ENCODE measurements at regions of chr17 and their contacts with region 1.

Region 1: GRCh38 chr17:76053246-76054116 is 18.8 kb downstream of the SRP68 start:
- DNase-seq: peak; percentile 56 to 79
- H3K4me3 ChIP-seq: peak overlapping the region; percentile 22; the same call in 1 of the 2 replicates
- H3K27ac ChIP-seq: peak overlapping the region; percentile 94
- H3K4me1 ChIP-seq: peaks cover 60% of the 10 kb centered on the region
- H3K27me3 ChIP-seq: no peaks in the 10 kb centered on the region
- CTCF ChIP-seq: no peak

Region 2: DNA sequence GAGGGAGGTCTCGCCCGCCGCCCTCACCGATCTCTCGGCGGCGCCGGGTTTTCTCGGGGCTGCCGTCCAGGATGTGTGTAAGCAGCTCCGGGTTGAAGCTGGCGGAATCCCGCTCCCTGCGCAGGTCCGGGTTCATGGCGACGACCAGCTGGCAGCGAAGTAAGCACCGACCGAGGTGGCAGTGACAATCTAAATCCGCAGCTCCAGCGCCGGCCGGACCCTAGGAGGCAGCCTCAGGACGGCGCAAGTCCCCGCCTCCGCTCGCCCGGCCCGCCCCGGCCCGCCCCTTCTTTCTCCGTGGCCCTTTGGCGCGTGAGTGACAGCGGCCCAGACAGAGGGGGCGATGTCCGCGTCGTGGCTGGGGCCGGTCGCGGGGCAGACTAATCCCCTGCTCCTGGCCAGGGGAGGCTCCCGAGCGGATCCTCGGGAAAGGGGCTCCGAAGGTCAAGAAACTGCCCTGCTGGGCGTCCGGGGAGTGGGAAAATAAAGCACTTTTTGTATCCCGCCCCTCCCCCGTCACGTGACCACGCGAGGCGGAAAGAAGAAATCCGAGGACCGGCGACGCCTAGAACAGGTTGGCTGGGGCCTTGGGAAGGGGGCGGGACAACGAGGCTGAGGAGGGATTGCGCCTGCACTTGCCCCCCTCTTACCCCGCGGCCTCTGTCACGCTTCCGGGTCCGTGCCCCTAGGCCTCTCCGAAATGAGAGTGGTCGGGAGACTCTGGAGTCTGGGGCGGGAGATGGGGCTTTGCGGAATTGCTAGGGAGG is 74.4 kb before region 1 on chr17 and contains the starts of genes ACOX1 and TEN1:
- CTCF ChIA-PET with region 1: no interaction called
- POLR2A ChIA-PET with region 1: no interaction called
- intact Hi-C with region 1: loop called (anchors 1 kb)
- DNase-seq: peak; percentile 91 to 96
- H3K4me3 ChIP-seq: peak within 1 kb of the TSS; percentile 82
- H3K27ac ChIP-seq: peak within 1 kb of the TSS; percentile 87
- H3K4me1 ChIP-seq: peaks cover 63% of the 10 kb centered on the region
- H3K27me3 ChIP-seq: no peaks in the 10 kb centered on the region
- CTCF ChIP-seq: peak; percentile 21; the same call in 1 of the 2 replicates
- total RNA-seq, gene ACOX1: 35.5 and 37.1 TPM in 2 replicates
- total RNA-seq, gene TEN1: 19.6 and 22.7 TPM in 2 replicates

Region 3: GRCh38 chr17:76014184-76014924 is 39.1 kb before region 1 on chr17:
- CTCF ChIA-PET with region 1: interaction called, 16 read pairs
- POLR2A ChIA-PET with region 1: no interaction called
- intact Hi-C with region 1: loop called (anchors 1 kb)
- DNase-seq: peak in 1 of 2 experiments; percentile 69
- H3K4me3 ChIP-seq: no peak overlapping the region
- H3K27ac ChIP-seq: no peak overlapping the region
- H3K4me1 ChIP-seq: no peaks in the 10 kb centered on the region
- H3K27me3 ChIP-seq: no peaks in the 10 kb centered on the region
- CTCF ChIP-seq: peak; percentile 94

Region 4: GRCh38 chr17:76027159-76027839 is 26.2 kb before region 1 on chr17 and contains the start of gene EVPL:
- CTCF ChIA-PET with region 1: interaction called, 3 read pairs
- POLR2A ChIA-PET with region 1: interaction called, 4 read pairs
- intact Hi-C with region 1: loop called (anchors 1 kb)
- DNase-seq: peak; percentile 91 to 98
- H3K4me3 ChIP-seq: peak within 1 kb of the TSS; percentile 71
- H3K27ac ChIP-seq: peak within 1 kb of the TSS; percentile 47; the same call in 1 of the 2 replicates
- H3K4me1 ChIP-seq: peaks cover 25% of the 10 kb centered on the region
- H3K27me3 ChIP-seq: no peaks in the 10 kb centered on the region
- CTCF ChIP-seq: no peak
- total RNA-seq, gene EVPL: 60.8 and 77.8 TPM in 2 replicates

Region 5: DNA sequence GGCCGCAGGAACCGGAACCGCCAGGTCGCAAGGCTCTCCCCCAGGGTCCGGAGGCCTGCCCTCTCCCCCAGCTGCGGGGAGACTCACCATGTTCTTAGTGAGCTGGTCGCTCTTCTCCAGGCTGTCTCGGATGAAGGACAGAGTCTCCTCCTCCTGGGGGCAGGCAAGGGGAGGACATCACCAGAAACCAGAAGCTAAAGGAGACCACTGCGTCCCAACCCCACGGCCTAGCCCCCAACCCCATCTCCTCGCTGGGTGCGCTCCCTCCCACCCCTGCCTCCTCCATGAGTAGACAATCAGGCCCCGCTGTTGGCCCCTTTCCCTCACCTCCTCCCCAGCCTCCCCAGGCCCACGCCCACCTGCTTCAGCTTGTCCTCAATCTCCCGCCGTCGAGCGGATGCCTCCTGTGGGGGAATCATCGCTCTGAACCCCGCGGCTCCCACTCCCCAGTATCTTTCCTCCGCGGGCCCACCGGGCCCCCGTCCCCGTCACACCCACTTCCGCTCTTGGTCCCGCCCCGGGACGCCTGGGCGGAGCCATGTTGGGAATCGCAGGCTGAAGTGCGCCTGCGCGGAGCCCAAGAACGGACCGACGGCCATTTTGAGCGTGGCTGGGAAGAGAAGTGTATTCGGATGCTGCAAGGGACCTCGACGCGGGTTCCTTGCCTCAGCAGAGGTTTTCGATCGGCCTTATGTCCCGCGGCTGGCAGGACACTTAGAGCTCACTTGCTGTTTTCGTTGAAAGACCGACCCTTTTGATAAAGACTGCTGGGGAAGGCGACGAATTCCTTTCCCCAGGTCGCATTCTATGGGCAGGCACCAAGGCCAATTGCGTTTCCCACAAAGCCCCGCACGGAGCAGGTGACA is 50.0 kb after region 1 on chr17 and contains the start of gene EXOC7:
- CTCF ChIA-PET with region 1: interaction called, 12 read pairs
- POLR2A ChIA-PET with region 1: interaction called, 5 read pairs
- intact Hi-C with region 1: no loop called
- DNase-seq: peak; percentile 69 to 92
- H3K4me3 ChIP-seq: peak within 1 kb of the TSS; percentile 86
- H3K27ac ChIP-seq: peak within 1 kb of the TSS; percentile 73
- H3K4me1 ChIP-seq: peaks cover 7% of the 10 kb centered on the region
- H3K27me3 ChIP-seq: no peaks in the 10 kb centered on the region
- CTCF ChIP-seq: no peak; the same call in 1 of the 2 replicates
- total RNA-seq, gene EXOC7: 118 and 131 TPM in 2 replicates

Region 6: DNA sequence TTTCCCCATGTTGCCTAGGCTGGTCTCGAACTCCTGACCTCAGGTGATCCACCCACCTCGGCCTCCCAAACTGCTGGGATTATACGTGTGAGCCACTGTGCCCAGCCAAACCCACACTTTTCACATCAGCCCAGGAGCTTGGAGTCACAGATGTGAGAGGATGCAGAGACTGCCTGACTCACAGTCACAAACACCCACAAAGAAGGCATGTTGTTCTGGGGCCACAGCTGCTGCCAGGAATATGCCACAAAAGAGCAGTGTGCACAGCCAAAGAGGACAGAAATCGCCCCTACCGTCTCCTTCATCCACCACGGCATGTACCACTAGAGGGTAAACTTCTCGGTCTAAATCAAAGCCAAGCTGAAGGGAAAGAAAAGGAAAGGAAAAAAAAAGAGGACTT is 112.7 kb after region 1 on chr17:
- CTCF ChIA-PET with region 1: no interaction called
- POLR2A ChIA-PET with region 1: no interaction called
- intact Hi-C with region 1: no loop called
- DNase-seq: no peak
- H3K4me3 ChIP-seq: no peak overlapping the region
- H3K27ac ChIP-seq: no peak overlapping the region
- H3K4me1 ChIP-seq: no peaks in the 10 kb centered on the region
- H3K27me3 ChIP-seq: no peaks in the 10 kb centered on the region
- CTCF ChIP-seq: no peak

Region 7: DNA sequence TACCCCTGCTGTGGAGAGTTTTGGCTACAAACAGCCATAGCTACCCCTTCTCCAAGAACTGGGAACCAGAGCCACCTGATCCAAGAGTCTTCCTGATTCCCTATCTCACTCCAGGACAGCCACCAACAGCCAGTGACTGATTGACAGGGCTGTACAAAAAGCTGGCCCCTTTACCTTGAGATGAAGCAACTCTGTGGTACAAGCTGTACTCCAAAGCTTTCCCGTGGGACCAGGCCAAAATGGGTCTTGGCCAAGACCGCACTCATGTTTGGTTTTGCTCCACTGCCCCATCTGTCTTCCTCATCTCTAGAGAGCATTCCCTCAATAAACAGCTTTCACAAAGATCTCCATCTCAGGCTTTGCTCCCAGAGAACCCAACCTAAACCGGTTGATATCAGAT is 143.2 kb after region 1 on chr17:
- CTCF ChIA-PET with region 1: no interaction called
- POLR2A ChIA-PET with region 1: no interaction called
- intact Hi-C with region 1: no loop called
- DNase-seq: no peak
- H3K4me3 ChIP-seq: no peak overlapping the region
- H3K27ac ChIP-seq: no peak overlapping the region
- H3K4me1 ChIP-seq: no peaks in the 10 kb centered on the region
- H3K27me3 ChIP-seq: no peaks in the 10 kb centered on the region
- CTCF ChIP-seq: no peak

Region 8: DNA sequence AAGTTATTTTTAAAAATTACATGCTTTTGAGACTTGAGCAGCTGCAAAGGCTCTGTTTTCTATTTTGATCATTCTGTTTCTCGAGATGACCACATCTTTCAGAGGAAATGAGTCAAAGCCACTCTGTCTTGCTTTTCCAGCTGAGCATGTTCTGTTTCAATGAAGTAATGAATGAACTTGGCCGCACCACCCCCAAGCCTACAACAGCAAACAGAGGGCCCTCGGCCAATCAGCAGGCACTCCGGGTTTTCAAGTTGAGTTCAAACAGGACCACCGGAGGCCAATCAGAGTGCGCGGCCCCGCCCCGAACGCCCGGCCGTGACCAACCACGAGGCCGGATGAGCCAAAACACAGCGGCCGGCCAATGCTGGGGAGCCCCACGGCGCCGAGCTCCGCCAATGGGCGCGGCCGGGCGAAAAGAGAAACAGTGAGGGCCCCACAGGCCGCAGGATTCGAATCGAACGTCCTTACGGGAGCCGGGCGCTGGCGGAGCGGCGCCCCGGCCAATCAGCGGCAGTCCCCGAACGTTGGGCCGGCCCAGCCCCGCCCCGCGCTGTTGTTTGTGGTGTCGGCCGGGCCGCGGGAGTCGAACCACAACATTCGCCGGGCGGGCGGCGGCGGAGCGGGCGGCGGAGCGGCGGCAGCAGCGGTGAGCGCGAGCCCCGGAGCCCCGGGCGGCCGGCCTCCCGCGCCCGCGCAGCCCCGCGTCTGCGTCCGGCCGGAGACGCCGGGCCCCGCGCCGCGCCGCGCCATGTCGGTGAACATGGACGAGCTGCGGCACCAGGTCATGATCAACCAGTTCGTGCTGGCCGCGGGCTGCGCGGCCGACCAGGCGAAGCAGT is 211.5 kb after region 1 on chr17 and contains the start of gene UBALD2:
- CTCF ChIA-PET with region 1: no interaction called
- POLR2A ChIA-PET with region 1: no interaction called
- intact Hi-C with region 1: loop called (anchors 1 kb)
- DNase-seq: peak; percentile 97 to 99
- H3K4me3 ChIP-seq: peak within 1 kb of the TSS; percentile 77
- H3K27ac ChIP-seq: peak within 1 kb of the TSS; percentile 88
- H3K4me1 ChIP-seq: peaks cover 63% of the 10 kb centered on the region
- H3K27me3 ChIP-seq: no peaks in the 10 kb centered on the region
- CTCF ChIP-seq: no peak
- total RNA-seq, gene UBALD2: 110 and 134 TPM in 2 replicates